Mammary epithelial cell (primary cell): ENCODE measurements at regions of chr16 and their contacts with region 1.

Region 1: DNA sequence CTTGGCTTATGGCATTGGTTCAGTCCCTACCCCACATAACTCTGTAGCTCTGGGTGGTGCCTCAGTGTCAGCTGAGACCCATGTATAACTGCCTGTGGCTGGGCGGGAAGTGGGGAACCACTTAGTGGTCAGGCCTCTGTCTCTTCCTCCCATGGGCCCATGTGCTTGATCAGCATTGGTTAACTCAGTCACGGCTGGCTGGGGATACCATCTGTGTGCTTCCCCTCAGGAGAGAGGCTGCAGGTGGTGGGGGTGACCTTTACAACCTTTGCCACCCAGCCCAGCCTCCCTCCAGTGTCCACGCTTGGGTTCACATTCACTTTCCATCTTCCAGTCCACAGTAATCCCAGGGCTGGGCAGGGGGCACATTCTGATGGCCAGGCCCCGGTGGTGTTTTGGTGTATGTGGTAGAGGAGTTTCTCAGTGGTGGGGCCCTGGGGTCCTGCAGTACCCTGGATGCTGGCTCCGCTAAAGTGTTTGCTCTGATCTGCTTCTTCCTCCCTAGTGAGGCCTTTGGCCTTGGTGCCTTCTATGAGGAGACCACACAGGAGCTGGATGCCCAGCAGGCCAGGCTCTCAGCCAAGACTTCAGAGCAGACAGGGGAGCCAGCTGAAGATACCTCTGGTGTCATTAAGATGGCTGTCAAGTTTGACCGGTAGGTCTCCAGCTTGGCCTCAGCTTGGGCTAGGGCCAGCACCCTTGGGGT is 10.2 kb upstream of the NFATC3 start:
- DNase-seq: no peak
- H3K4me3 ChIP-seq: no peak overlapping the region
- H3K27ac ChIP-seq: no peak overlapping the region
- H3K4me1 ChIP-seq: peaks cover 17% of the 10 kb centered on the region
- H3K27me3 ChIP-seq: no peaks in the 10 kb centered on the region
- CTCF ChIP-seq: no peak

Region 2: DNA sequence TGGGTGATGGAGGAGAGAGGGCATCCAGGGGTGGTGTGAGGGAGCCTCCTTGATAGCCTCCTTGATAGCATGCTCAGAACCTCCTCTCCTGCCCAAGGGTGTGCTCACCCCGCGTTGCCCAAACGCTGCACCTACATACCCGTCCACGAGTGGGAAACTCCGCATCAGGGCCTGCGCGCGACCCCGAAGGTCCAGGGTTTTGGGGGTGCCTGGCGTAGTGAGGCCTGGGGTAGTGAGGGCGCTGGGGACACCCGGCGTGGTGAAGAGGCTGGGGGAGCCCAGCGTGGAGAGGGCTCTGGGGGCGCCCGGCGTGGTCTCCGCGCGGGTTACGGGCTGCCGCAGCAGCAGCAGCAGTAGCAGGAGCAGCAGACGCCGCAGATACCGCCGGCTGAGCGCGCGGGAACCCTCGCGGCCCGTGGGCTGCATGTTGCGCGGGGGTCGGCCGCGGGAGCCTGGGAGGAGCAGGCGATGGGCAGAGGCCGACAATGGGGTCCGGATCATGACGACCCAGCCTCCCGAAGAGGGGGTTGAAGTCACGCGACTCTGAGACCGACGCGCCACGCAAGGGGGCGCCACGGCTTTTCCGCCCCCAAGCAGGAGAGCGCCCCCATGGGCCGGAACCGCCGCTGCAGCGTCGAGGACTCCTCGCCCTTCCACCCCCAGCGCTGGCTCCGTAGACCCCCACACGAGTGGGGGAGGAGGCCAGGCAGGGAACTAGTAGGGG is 94.9 kb before region 1 on chr16 and contains the start of gene DPEP3:
- CTCF ChIA-PET with region 1: no interaction called
- dilution Hi-C with region 1: loop called (anchors 5 kb)
- in situ Hi-C with region 1: no loop called
- intact Hi-C with region 1: no loop called
- DNase-seq: no peak
- H3K4me3 ChIP-seq: no peak within 1 kb of the TSS
- H3K27ac ChIP-seq: no peak within 1 kb of the TSS
- H3K4me1 ChIP-seq: peaks cover 9% of the 10 kb centered on the region
- H3K27me3 ChIP-seq: no peaks in the 10 kb centered on the region
- CTCF ChIP-seq: peak; percentile 10
- total RNA-seq, gene DPEP3: not detected

Region 3: DNA sequence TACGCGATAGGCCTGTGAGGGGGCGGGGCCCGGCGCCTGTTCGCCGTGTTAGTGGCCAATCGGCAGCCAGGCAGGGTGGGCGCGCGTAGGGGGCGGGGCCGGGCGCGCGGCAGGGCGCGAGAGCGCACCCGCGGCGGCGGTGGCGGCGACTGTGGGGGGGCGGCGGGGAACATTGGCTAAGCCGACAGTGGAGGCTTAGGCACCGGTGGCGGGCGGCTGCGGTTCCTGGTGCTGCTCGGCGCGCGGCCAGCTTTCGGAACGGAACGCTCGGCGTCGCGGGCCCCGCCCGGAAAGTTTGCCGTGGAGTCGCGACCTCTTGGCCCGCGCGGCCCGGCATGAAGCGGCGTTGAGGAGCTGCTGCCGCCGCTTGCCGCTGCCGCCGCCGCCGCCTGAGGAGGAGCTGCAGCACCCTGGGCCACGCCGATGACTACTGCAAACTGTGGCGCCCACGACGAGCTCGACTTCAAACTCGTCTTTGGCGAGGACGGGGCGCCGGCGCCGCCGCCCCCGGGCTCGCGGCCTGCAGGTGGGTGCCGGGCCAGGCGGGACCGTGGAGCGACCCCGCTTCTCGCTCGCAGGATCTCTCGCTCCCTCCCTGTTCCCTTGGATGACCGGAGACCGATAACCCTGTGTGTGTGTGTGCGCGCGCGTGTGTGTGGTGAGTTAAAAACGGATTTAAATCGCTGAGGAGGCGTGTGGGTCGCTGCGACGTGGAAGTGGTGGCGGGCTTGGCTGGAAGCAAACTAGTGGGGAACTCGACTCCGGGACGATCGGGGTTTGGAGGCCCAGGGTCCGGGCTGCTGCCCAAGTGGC is 10.5 kb after region 1 on chr16 and contains the start of gene NFATC3:
- CTCF ChIA-PET with region 1: interaction called, 7 read pairs
- dilution Hi-C with region 1: no loop called
- in situ Hi-C with region 1: no loop called
- intact Hi-C with region 1: loop called (anchors 1 kb)
- DNase-seq: peak; percentile 93
- H3K4me3 ChIP-seq: peak within 1 kb of the TSS; percentile 73 to 84 (median 83)
- H3K27ac ChIP-seq: peak within 1 kb of the TSS; percentile 52
- H3K4me1 ChIP-seq: peaks cover 29% of the 10 kb centered on the region
- H3K27me3 ChIP-seq: no peaks in the 10 kb centered on the region
- CTCF ChIP-seq: no peak
- total RNA-seq, gene NFATC3: 19.2 to 27.3 TPM

Region 4: DNA sequence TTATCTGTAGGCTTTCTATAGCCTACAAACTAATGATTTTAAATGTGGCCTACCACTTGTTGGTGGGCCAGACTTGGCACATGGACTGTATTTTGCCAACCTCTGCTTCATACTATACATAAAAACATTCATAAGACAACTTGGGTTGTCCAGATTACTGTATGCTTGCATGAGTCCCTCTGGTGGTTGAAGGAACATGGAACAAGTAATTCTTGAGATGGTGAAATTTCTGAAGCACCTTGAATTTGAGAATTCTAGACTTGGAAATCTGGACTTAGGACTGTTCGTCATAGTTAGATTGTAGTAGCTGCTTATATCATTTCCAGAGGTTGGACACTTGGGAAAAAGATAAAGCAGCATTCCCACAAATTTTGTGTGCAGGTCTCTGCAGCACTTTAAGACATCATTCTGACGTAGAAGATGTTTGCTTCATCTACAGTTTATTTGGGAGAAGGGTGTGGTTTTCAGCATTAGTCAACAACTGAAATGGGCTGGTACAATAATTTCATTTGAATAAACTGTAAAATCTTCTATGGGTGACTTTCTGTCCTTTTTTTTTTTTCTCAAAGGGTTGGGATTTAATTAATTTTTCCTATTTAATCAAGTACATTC is 41.4 kb after region 1 on chr16:
- CTCF ChIA-PET with region 1: no interaction called
- dilution Hi-C with region 1: no loop called
- in situ Hi-C with region 1: no loop called
- intact Hi-C with region 1: loop called (anchors 1 kb)
- DNase-seq: peak; percentile 20
- H3K4me3 ChIP-seq: no peak overlapping the region
- H3K27ac ChIP-seq: no peak overlapping the region
- H3K4me1 ChIP-seq: no peaks in the 10 kb centered on the region
- H3K27me3 ChIP-seq: no peaks in the 10 kb centered on the region
- CTCF ChIP-seq: peak; percentile 50 to 71

Region 5: DNA sequence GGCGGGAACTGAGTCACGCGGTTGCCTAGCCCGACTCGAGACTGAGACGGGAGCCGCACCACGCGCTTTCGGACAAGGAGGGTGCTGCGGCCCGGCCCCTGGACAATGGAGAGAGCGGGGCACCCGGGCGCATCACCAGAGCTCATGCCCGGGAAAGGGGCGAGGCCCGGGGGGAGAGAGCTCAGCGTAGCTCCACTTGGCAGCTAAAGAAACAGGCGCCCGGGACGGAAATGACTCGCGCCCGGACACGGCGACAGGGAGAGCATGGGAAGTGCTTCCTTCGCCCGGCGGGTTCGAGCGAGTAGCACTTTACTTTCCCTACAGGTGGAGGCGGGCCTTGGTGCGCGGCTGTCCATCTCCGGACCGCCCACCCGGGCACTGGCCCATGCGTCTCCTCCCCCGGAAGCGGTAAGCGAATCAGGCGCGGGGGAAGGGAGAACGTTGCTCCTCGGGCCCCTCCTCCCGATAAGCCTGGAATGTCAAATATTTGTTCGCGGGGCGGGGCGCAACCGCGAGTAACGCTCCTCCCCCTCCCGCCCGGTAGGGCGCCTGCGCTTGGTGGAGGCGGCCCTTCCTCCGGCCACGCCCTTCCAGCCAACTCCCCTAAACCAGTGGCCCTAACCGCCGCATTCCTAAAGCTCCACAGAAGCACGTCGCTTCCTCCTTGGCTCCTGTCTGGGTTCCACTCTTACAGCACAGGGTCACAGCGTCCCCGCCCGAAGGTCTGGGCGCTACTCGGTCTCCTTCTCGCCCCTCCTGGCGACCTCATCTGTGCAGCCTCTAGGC is 162.4 kb after region 1 on chr16:
- CTCF ChIA-PET with region 1: interaction called, 3 read pairs
- dilution Hi-C with region 1: no loop called
- in situ Hi-C with region 1: loop called in 1 of 2 experiments (anchors 10 kb)
- intact Hi-C with region 1: no loop called
- DNase-seq: peak; percentile 99
- H3K4me3 ChIP-seq: peak overlapping the region; percentile 67 to 69 (median 67)
- H3K27ac ChIP-seq: peak overlapping the region; percentile 82
- H3K4me1 ChIP-seq: peaks cover 36% of the 10 kb centered on the region
- H3K27me3 ChIP-seq: no peaks in the 10 kb centered on the region
- CTCF ChIP-seq: no peak